PC-3 (cell line): ENCODE measurements at regions of chr5 and their contacts with region 1.

Region 1: DNA sequence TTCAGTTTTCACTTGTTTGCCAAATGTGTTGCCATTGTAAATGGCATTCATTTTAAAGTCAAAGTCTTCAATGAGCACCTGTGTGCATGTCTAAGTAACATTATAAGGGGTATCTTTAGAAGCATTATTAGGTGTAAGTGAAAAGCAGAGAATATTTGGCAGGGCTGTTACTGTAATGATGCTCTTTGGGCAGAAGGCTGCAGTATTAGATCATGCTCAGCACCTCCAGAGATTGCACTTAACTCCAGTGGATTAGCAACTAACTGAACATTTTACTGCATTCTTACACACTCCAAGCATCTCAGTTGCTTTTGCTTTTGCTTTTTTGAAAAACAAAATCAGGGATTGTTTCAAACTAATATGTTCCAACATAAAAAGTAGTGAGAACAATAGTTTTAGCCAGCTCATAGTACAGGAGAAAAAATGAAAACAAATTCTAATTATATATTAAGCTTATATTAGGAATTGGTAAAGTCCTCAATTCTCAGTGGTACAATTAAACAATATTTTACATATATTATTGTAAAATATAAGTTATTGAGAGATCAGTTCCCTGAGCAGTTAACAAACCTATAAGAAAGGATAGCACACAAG is 1740.9 kb upstream of the CDH9 start:
- DNase-seq: peak; percentile 39
- ATAC-seq: peak; percentile 82
- H3K4me3 ChIP-seq: no peak overlapping the region
- H3K27ac ChIP-seq: no peak overlapping the region
- H3K4me1 ChIP-seq: 0 out of 2 replicates have a peak, but pooled peaks cover 3% of the 10 kb centered on the region
- H3K27me3 ChIP-seq: no peaks in the 10 kb centered on the region
- CTCF ChIP-seq: peak; percentile 61

Region 2: DNA sequence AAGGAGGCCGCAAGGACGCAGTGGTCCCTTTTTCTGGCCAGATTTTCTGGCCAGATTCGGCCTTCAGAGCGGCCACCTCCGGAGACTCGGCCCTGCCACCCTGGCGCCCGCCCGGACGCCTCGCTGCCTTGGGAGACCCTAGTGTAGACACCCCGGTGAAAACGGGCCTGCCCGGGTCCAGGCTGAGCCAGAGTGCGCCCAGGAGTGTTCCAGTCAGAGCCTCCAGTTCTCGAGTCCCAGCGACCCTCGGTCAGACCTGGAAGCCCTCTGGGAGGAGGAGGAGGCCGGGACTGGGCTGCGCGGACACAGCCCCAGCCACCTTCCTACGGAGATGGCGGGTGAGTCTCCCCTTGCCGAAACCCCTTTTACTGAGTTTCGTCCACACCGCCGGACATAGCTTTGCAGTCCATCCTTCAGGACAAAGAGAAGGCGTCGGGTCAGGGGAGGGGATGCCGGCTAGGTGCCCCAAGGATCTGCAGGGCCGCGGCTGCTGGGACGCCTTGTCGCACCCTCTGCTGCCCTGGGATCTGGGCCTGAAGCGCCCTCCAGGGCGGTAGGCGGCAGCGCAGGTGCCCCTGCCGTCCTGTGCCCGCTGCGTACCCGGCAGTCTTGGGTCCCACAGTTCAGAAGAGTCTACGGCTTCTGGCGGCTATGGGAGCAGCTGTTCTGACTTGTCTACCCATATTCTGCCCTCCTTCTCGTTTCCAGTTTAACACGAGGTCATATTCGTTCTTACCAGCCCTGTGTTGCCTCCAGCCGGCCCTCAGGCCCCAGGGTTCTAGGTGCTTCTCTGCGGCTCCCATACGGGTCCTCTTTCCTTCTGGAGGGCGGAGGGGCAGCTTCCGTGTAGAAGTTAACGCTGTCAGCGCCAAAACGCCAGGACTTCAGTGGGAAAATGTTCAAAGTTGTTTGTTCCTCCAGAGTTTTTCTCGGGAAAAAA is 30.8 kb after region 1 on chr5:
- CTCF ChIA-PET with region 1: no interaction called
- POLR2A ChIA-PET with region 1: no interaction called
- intact Hi-C with region 1: loop called (anchors 1 kb)
- DNase-seq: no peak
- ATAC-seq: no peak
- H3K4me3 ChIP-seq: no peak overlapping the region
- H3K27ac ChIP-seq: no peak overlapping the region
- H3K4me1 ChIP-seq: peaks cover 7% of the 10 kb centered on the region; the same call in 1 of the 2 replicates
- H3K27me3 ChIP-seq: no peaks in the 10 kb centered on the region
- CTCF ChIP-seq: no peak

Region 3: GRCh38 chr5:28823231-28823630 is 44.0 kb after region 1 on chr5:
- CTCF ChIA-PET with region 1: no interaction called
- POLR2A ChIA-PET with region 1: no interaction called
- intact Hi-C with region 1: no loop called
- DNase-seq: no peak
- ATAC-seq: no peak
- H3K4me3 ChIP-seq: no peak overlapping the region
- H3K27ac ChIP-seq: no peak overlapping the region
- H3K4me1 ChIP-seq: no peaks in the 10 kb centered on the region
- H3K27me3 ChIP-seq: no peaks in the 10 kb centered on the region
- CTCF ChIP-seq: no peak

Region 4: DNA sequence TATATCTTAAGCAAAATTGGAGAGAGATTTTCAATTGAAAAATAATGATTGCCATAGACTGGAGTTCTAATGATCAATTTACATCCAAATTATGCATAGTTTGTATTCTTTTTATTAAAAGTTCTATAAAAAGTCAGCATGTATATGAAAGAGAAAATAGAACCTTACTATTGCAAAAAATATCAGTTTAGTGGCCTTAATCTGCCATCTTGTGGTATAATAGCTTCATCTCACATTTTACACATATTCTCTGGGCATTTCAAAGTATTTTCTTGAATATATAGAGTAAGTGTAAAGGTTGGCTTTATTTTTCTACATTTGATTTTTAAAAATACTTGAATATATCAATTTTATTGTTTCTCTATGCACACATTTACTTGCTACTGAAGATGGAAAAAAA is 117.7 kb after region 1 on chr5:
- CTCF ChIA-PET with region 1: interaction called, 11 read pairs
- POLR2A ChIA-PET with region 1: no interaction called
- intact Hi-C with region 1: loop called (anchors 1 kb)
- DNase-seq: peak; percentile 59
- ATAC-seq: no peak
- H3K4me3 ChIP-seq: no peak overlapping the region
- H3K27ac ChIP-seq: no peak overlapping the region
- H3K4me1 ChIP-seq: 0 out of 2 replicates have a peak, but pooled peaks cover 3% of the 10 kb centered on the region
- H3K27me3 ChIP-seq: no peaks in the 10 kb centered on the region
- CTCF ChIP-seq: peak; percentile 59

Region 5: DNA sequence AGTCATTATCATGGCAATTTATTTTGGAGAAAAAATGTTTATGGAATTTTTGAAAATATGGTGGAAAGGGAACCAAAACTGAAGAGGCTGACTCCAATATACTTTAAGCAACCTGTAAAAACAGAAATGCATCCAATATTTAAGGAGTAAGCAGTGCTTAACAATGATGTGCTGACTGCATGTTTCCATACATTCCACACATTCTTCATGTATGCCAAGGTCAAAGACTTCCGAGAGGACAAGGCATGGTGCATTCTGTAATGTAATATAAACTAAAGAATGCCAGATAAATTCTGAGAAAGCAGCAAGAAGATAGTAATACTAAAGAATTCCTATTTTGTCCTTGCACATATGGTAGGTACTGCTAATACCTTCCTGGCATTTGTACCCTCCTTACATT is 275.0 kb after region 1 on chr5:
- CTCF ChIA-PET with region 1: no interaction called
- POLR2A ChIA-PET with region 1: no interaction called
- intact Hi-C with region 1: no loop called
- DNase-seq: no peak
- ATAC-seq: no peak
- H3K4me3 ChIP-seq: no peak overlapping the region
- H3K27ac ChIP-seq: no peak overlapping the region
- H3K4me1 ChIP-seq: no peaks in the 10 kb centered on the region
- H3K27me3 ChIP-seq: no peaks in the 10 kb centered on the region
- CTCF ChIP-seq: no peak